ENCODE measurements at regions of chr20 and their contacts with region 1.

Region 1: GRCh38 chr20:34312544-34313217 is 9.5 kb upstream of the AHCY start:
- DNase-seq: peak; percentile 65
- ATAC-seq: peak; percentile 100
- H3K4me3 ChIP-seq: no peak overlapping the region
- H3K27ac ChIP-seq: no peak overlapping the region
- H3K4me1 ChIP-seq: peaks cover 8% of the 10 kb centered on the region; the same call in 1 of the 2 replicates
- H3K27me3 ChIP-seq: peaks cover 0 to 9% of the 10 kb centered on the region in 2 experiments; a peak in 1 of 4 replicates
- CTCF ChIP-seq: peak; percentile 100; a peak in 5 of 6 replicates
- EP300 ChIP-seq: no peak
- POLR2A ChIP-seq: no peak
- RAD21 ChIP-seq: peak; percentile 100

Region 2: GRCh38 chr20:34254979-34255378 is 57.7 kb before region 1 on chr20:
- CTCF ChIA-PET with region 1: interaction called, 8 read pairs
- POLR2A ChIA-PET with region 1: no interaction called
- RAD21 ChIA-PET with region 1: interaction called, 14 read pairs
- SMC1A ChIA-PET with region 1: interaction called, 3 read pairs
- in situ Hi-C with region 1: no loop called
- intact Hi-C with region 1: no loop called
- DNase-seq: no peak
- ATAC-seq: no peak
- H3K4me3 ChIP-seq: no peak overlapping the region
- H3K27ac ChIP-seq: no peak overlapping the region
- H3K4me1 ChIP-seq: no peaks in the 10 kb centered on the region
- H3K27me3 ChIP-seq: no peaks in the 10 kb centered on the region
- CTCF ChIP-seq: no peak
- EP300 ChIP-seq: no peak
- POLR2A ChIP-seq: no peak
- RAD21 ChIP-seq: no peak

Region 3: DNA sequence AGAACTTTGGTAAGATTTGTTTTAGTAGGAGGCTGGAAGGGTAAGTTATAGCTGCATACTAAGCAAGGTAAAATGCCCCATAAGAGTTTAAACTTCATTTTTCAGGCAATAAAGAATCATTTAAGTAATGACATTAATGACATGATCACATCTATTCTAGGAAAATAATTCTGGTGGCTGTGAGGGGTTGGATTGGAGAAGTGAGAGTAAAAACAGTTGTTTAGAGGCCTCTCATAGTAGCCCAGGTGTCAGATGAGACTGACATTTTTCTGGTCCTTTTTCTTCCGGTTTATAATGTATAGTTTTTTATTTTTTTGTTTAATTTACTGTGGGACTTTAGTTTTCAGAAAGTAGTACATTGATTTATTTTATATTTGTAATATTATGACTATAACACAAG is 91.2 kb after region 1 on chr20:
- CTCF ChIA-PET with region 1: interaction called, 15 read pairs
- POLR2A ChIA-PET with region 1: no interaction called
- RAD21 ChIA-PET with region 1: interaction called, 18 read pairs
- SMC1A ChIA-PET with region 1: interaction called, 12 read pairs
- in situ Hi-C with region 1: no loop called
- intact Hi-C with region 1: no loop called
- DNase-seq: no peak
- ATAC-seq: peak; percentile 81
- H3K4me3 ChIP-seq: peak overlapping the region; percentile 6; the same call in 1 of the 2 replicates
- H3K27ac ChIP-seq: peak overlapping the region; percentile 76
- H3K4me1 ChIP-seq: peaks cover 30% of the 10 kb centered on the region
- H3K27me3 ChIP-seq: no peaks in the 10 kb centered on the region
- CTCF ChIP-seq: no peak
- EP300 ChIP-seq: no peak
- POLR2A ChIP-seq: no peak
- RAD21 ChIP-seq: no peak

Region 4: GRCh38 chr20:34445177-34446065 is 132.7 kb after region 1 on chr20:
- CTCF ChIA-PET with region 1: interaction called, 18 read pairs
- POLR2A ChIA-PET with region 1: no interaction called
- RAD21 ChIA-PET with region 1: interaction called, 10 read pairs
- SMC1A ChIA-PET with region 1: interaction called, 5 read pairs
- in situ Hi-C with region 1: no loop called
- intact Hi-C with region 1: no loop called
- DNase-seq: no peak
- ATAC-seq: no peak
- H3K4me3 ChIP-seq: no peak overlapping the region
- H3K27ac ChIP-seq: no peak overlapping the region
- H3K4me1 ChIP-seq: no peaks in the 10 kb centered on the region
- H3K27me3 ChIP-seq: no peaks in the 10 kb centered on the region
- CTCF ChIP-seq: no peak
- EP300 ChIP-seq: no peak
- POLR2A ChIP-seq: no peak
- RAD21 ChIP-seq: no peak

Region 5: DNA sequence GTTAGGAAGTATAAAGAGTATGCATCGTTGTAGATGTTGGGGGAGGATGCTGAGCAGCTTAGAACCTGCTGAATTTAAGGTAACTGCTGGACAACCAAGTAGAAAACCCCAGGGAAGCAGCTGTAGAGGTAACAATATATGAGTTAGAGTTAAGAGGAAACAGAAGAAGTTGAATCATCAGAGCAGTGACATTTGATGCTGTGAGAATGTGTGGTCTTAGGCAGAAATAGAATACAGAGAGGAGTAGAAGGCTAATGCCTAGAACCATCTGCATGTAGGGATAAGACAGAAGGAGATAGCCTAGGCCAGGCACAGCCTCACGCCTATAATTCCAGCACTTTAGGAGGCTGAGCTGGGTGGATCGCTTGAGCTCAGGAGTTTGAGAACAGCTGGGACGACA is 181.0 kb after region 1 on chr20:
- CTCF ChIA-PET with region 1: interaction called, 10 read pairs
- POLR2A ChIA-PET with region 1: no interaction called
- RAD21 ChIA-PET with region 1: interaction called, 5 read pairs
- SMC1A ChIA-PET with region 1: interaction called, 4 read pairs
- in situ Hi-C with region 1: no loop called
- intact Hi-C with region 1: no loop called
- DNase-seq: no peak
- ATAC-seq: no peak
- H3K4me3 ChIP-seq: no peak overlapping the region
- H3K27ac ChIP-seq: no peak overlapping the region
- H3K4me1 ChIP-seq: no peaks in the 10 kb centered on the region
- H3K27me3 ChIP-seq: no peaks in the 10 kb centered on the region
- CTCF ChIP-seq: no peak
- EP300 ChIP-seq: no peak
- POLR2A ChIP-seq: no peak
- RAD21 ChIP-seq: no peak

Region 6: GRCh38 chr20:34538671-34539123 is 226.0 kb after region 1 on chr20:
- CTCF ChIA-PET with region 1: interaction called, 23 read pairs
- POLR2A ChIA-PET with region 1: no interaction called
- RAD21 ChIA-PET with region 1: interaction called, 21 read pairs
- SMC1A ChIA-PET with region 1: interaction called, 4 read pairs
- in situ Hi-C with region 1: no loop called
- intact Hi-C with region 1: no loop called
- DNase-seq: no peak
- ATAC-seq: peak; percentile 85
- H3K4me3 ChIP-seq: no peak overlapping the region
- H3K27ac ChIP-seq: no peak overlapping the region
- H3K4me1 ChIP-seq: peaks cover 4% of the 10 kb centered on the region; the same call in 1 of the 2 replicates
- H3K27me3 ChIP-seq: no peaks in the 10 kb centered on the region
- CTCF ChIP-seq: peak; percentile 78 to 92 (median 88)
- EP300 ChIP-seq: no peak
- POLR2A ChIP-seq: no peak
- RAD21 ChIP-seq: peak; percentile 69

Region 7: DNA sequence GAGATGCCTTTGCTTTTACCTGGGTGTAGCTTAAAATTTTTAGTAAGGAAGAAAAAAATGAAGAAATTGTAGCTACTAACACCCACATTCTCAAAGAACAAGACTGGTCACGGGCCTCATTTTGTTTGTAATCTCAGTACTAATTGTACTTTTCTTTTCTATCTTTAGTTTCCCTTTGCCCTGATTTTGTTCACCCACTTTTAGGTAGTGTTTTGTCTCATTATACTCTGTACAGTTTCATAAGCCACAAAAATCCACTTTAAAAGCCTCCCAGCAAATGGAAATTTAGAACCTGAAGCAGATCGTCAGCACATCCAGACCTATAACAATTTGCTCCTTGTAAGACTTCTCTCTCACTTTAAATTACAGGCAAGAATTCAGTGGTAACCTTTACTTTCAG is 434.8 kb after region 1 on chr20:
- CTCF ChIA-PET with region 1: interaction called, 3 read pairs
- POLR2A ChIA-PET with region 1: no interaction called
- RAD21 ChIA-PET with region 1: interaction called, 10 read pairs
- SMC1A ChIA-PET with region 1: no interaction called
- in situ Hi-C with region 1: no loop called
- intact Hi-C with region 1: no loop called
- DNase-seq: no peak
- ATAC-seq: peak; percentile 69
- H3K4me3 ChIP-seq: 0 out of 2 replicates have a peak overlapping the region, but pooled peaks have one; percentile 8
- H3K27ac ChIP-seq: peak overlapping the region; percentile 80
- H3K4me1 ChIP-seq: peaks cover 11% of the 10 kb centered on the region
- H3K27me3 ChIP-seq: no peaks in the 10 kb centered on the region
- CTCF ChIP-seq: no peak
- EP300 ChIP-seq: no peak
- POLR2A ChIP-seq: no peak
- RAD21 ChIP-seq: no peak